Upper lobe of right lung (tissue), 1 donor: ENCODE measurements at regions of chr6 and their contacts with region 1.

Region 1: GRCh38 chr6:39887381-39888070 is 46.7 kb downstream of the MOCS1 start:
- DNase-seq: peak; percentile 74
- ATAC-seq: peak; percentile 88
- H3K4me3 ChIP-seq: no peak overlapping the region
- H3K27ac ChIP-seq: peak overlapping the region; percentile 58
- H3K4me1 ChIP-seq: peaks cover 20% of the 10 kb centered on the region
- H3K27me3 ChIP-seq: no peaks in the 10 kb centered on the region
- CTCF ChIP-seq: no peak

Region 2: DNA sequence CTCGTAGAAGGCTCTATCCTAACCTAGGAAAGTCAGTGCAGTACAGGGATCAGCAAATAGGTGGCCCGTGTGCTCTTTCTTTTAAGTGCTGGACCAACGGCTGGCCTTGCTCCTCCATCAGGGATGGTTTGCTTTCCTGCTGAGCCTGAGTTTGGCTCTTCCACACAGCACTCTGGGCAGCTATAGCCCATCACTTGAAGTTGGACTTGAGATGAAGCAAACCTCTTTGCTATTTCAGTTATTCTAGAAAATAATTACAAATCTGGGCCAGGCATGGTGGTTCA is 498.1 kb before region 1 on chr6:
- intact Hi-C with region 1: loop called (anchors 10 kb)
- DNase-seq: no peak
- ATAC-seq: peak; percentile 47
- H3K4me3 ChIP-seq: no peak overlapping the region
- H3K27ac ChIP-seq: no peak overlapping the region
- H3K4me1 ChIP-seq: no peaks in the 10 kb centered on the region
- H3K27me3 ChIP-seq: no peaks in the 10 kb centered on the region
- CTCF ChIP-seq: no peak

Region 3: GRCh38 chr6:39453241-39453640 is 434.3 kb before region 1 on chr6:
- intact Hi-C with region 1: no loop called
- DNase-seq: no peak
- ATAC-seq: no peak
- H3K4me3 ChIP-seq: no peak overlapping the region
- H3K27ac ChIP-seq: no peak overlapping the region
- H3K4me1 ChIP-seq: no peaks in the 10 kb centered on the region
- H3K27me3 ChIP-seq: no peaks in the 10 kb centered on the region
- CTCF ChIP-seq: no peak

Region 4: GRCh38 chr6:40912158-40912946 is 1024.8 kb after region 1 on chr6:
- intact Hi-C with region 1: no loop called
- DNase-seq: no peak
- ATAC-seq: peak; percentile 78
- H3K4me3 ChIP-seq: no peak overlapping the region
- H3K27ac ChIP-seq: no peak overlapping the region
- H3K4me1 ChIP-seq: no peaks in the 10 kb centered on the region
- H3K27me3 ChIP-seq: no peaks in the 10 kb centered on the region
- CTCF ChIP-seq: peak; percentile 35